GM10248 (cell line): ENCODE measurements at regions of chr1 and their contacts with region 1.

Region 1: GRCh38 chr1:220235462-220235861 is 36.8 kb downstream of the RAB3GAP2 start:
- DNase-seq: no peak
- CTCF ChIP-seq: no peak

Region 2: DNA sequence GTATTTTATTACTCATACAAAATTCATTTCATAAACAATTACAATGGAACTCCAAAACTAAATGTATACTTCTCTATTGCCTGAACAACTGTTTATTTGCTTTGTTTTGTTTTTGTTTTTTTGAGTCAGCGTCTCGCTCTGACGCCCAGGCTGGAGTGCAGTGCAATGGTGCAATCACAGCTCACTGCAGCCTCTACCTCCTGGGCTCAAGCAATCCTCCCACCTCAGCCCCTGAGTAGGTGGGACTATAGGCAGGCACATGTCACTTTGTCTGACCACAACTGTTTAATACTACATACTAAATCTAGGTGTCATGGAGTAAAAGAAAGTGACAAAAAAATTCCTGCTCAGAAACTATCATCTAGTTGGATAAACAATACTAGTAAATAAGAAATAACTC is 12.5 kb before region 1 on chr1:
- CTCF ChIA-PET with region 1: interaction called, 75 read pairs
- POLR2A ChIA-PET with region 1: no interaction called
- DNase-seq: no peak
- CTCF ChIP-seq: no peak

Region 3: GRCh38 chr1:220483700-220484099 is 248.2 kb after region 1 on chr1:
- CTCF ChIA-PET with region 1: no interaction called
- POLR2A ChIA-PET with region 1: no interaction called
- DNase-seq: no peak
- CTCF ChIP-seq: no peak